CD14-positive monocyte (primary cell): ENCODE measurements at regions of chr5 and their contacts with region 1.

Region 1: DNA sequence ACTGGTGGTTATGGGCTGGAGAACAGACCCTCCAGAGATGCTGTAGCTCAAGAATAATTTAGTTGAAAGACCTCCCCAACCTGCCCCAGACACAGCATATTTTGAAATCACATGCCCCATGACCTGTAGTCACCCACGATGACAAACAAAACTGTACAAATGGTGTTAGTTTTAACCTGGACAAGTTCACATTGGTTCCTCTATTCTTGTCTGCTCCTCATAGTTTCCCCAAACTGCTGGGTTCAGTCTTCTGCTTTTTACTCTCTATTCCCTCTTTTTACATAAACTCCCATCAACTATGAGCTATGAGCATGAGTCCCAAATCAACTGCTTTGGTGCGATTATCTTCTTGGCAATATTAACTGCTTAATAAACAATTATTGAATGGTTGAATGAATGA is 365.3 kb upstream of the CLINT1 start:
- DNase-seq: peak; percentile 84 to 92 (median 91)
- H3K4me3 ChIP-seq: no peak overlapping the region
- H3K4me3 Mint-ChIP-seq: peak overlapping the region in 1 of 2 donors; percentile 62
- H3K27ac ChIP-seq: peak overlapping the region; percentile 56 to 76
- H3K27ac Mint-ChIP-seq: peak overlapping the region; percentile 88 to 95 (median 93)
- H3K4me1 ChIP-seq: peaks cover 20 to 27% of the 10 kb centered on the region in 2 donors
- H3K4me1 Mint-ChIP-seq: peaks cover 24% of the 10 kb centered on the region
- H3K27me3 ChIP-seq: no peaks in the 10 kb centered on the region
- H3K27me3 Mint-ChIP-seq: no peaks in the 10 kb centered on the region
- CTCF ChIP-seq: no peak

Region 2: GRCh38 chr5:158373608-158374395 is 149.5 kb after region 1 on chr5:
- intact Hi-C with region 1: loop called in 1 of 2 experiments (anchors 5 kb)
- DNase-seq: peak; percentile 44 to 80 (median 70)
- H3K4me3 ChIP-seq: peak overlapping the region in 1 of 3 experiments; percentile 45
- H3K4me3 Mint-ChIP-seq: peak overlapping the region in 1 of 2 donors; percentile 74
- H3K27ac ChIP-seq: no peak overlapping the region
- H3K27ac Mint-ChIP-seq: peak overlapping the region in 6 of 7 donors; percentile 27 to 90 (median 68)
- H3K4me1 ChIP-seq: peaks cover 28 to 34% of the 10 kb centered on the region in 2 donors
- H3K4me1 Mint-ChIP-seq: peaks cover 37% of the 10 kb centered on the region
- H3K27me3 ChIP-seq: peaks cover 29 to 31% of the 10 kb centered on the region in 2 donors
- H3K27me3 Mint-ChIP-seq: peaks cover 20 to 31% (median 28%) of the 10 kb centered on the region in 3 donors
- CTCF ChIP-seq: no peak